CD4-positive, alpha-beta T cell (primary cell): ENCODE measurements at regions of chr10 and their contacts with region 1.

Region 1: GRCh38 chr10:111360260-111360925 is 283.6 kb downstream of the ADRA2A start:
- DNase-seq: peak in 6 of 14 experiments; percentile 0 to 40 (median 10)
- ATAC-seq: no peak
- H3K4me3 ChIP-seq: no peak overlapping the region
- H3K4me3 Mint-ChIP-seq: no peak overlapping the region
- H3K27ac ChIP-seq: no peak overlapping the region
- H3K27ac Mint-ChIP-seq: no peak overlapping the region
- H3K4me1 ChIP-seq: no peaks in the 10 kb centered on the region
- H3K4me1 Mint-ChIP-seq: no peaks in the 10 kb centered on the region
- H3K27me3 ChIP-seq: peaks cover 0 to 18% of the 10 kb centered on the region in 2 experiments
- H3K27me3 Mint-ChIP-seq: peaks cover 31% of the 10 kb centered on the region
- CTCF ChIP-seq: no peak

Region 2: DNA sequence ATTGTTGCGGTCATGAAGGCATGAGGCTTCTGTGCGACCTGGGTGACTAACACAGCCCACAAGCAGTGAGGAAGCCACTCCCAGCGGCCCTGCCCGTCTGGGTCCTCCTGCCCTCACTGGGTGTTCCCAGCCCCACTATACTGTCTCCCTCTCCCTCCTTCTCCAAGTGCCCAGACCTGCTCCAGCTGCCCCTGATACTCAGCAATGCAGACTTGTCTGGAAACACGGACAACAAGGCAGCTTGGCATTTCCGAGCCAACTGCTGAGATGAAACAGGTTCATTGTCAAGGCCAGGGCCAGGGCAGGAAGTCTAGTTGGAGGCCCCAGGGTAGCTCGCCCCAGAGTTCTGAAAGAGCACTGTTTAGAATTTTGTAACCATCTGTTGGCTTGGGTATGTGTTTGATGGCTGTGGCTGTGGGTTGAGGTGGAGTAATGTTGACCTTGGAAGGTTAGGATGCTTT is 620.6 kb before region 1 on chr10:
- CTCF ChIA-PET with region 1: no interaction called
- POLR2A ChIA-PET with region 1: no interaction called
- intact Hi-C with region 1: loop called in 1 of 2 experiments (anchors 5 kb)
- DNase-seq: peak in 2 of 14 experiments; percentile 28 to 39
- ATAC-seq: no peak
- H3K4me3 ChIP-seq: no peak overlapping the region
- H3K4me3 Mint-ChIP-seq: peak overlapping the region; percentile 5
- H3K27ac ChIP-seq: no peak overlapping the region
- H3K27ac Mint-ChIP-seq: peak overlapping the region; percentile 8
- H3K4me1 ChIP-seq: peaks cover 36% of the 10 kb centered on the region
- H3K4me1 Mint-ChIP-seq: peaks cover 59% of the 10 kb centered on the region
- H3K27me3 ChIP-seq: no peaks in the 10 kb centered on the region
- H3K27me3 Mint-ChIP-seq: peaks cover 6% of the 10 kb centered on the region
- CTCF ChIP-seq: no peak

Region 3: GRCh38 chr10:111221682-111222480 is 138.5 kb before region 1 on chr10:
- CTCF ChIA-PET with region 1: no interaction called
- POLR2A ChIA-PET with region 1: no interaction called
- intact Hi-C with region 1: no loop called
- DNase-seq: no peak
- ATAC-seq: no peak
- H3K4me3 ChIP-seq: no peak overlapping the region
- H3K4me3 Mint-ChIP-seq: no peak overlapping the region
- H3K27ac ChIP-seq: no peak overlapping the region
- H3K27ac Mint-ChIP-seq: no peak overlapping the region
- H3K4me1 ChIP-seq: no peaks in the 10 kb centered on the region
- H3K4me1 Mint-ChIP-seq: no peaks in the 10 kb centered on the region
- H3K27me3 ChIP-seq: peaks cover 22 to 33% of the 10 kb centered on the region in 2 experiments
- H3K27me3 Mint-ChIP-seq: peaks cover 85% of the 10 kb centered on the region
- CTCF ChIP-seq: no peak